ENCODE measurements at regions of chr1 and their contacts with region 1.

Region 1: GRCh38 chr1:19643602-19644394 is at the start of gene NBL1:
- DNase-seq: peak; percentile 87
- H3K4me3 ChIP-seq: peak within 1 kb of the TSS; percentile 96
- H3K27ac ChIP-seq: peak within 1 kb of the TSS; percentile 79
- H3K4me1 ChIP-seq: peaks cover 18% of the 10 kb centered on the region
- H3K27me3 ChIP-seq: no peaks in the 10 kb centered on the region
- total RNA-seq, gene NBL1: 201 and 290 TPM in 2 replicates

Region 2: DNA sequence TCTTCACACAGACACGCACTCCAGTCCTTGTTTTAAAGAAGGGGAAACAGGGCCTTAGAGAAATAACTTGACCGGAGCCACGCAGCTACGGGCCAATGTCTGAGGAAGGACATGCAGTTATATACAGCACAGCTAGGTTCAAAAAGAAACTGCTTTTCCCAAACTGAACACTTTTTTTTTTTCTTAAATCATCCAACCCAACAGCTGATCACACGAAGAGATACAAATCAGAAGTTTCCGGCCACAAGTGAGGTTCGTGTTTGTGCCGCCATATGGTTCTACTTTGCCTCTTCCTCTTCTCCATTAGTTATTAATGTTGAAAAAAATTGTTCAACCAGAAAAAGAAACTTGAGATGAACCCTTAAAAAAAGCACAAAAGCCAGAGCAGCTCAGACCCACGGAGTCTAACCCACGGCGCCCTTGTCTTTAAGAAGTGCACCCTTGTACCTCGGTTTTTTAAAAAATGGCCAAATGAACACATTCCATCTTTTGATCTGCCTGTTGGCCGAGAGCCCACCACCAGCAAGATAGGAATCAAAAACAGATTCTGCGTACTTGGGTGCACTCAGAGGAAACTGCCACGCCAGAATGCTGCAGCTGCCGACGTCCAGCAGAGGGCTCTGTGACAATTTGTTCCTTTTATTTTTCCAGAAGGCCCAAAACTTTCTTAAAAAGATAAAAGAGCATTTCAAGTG is 252.8 kb before region 1 on chr1:
- in situ Hi-C with region 1: loop called (anchors 10 kb)
- DNase-seq: peak; percentile 91
- H3K4me3 ChIP-seq: peak overlapping the region; percentile 52
- H3K27ac ChIP-seq: peak overlapping the region; percentile 97
- H3K4me1 ChIP-seq: peaks cover 40% of the 10 kb centered on the region
- H3K27me3 ChIP-seq: no peaks in the 10 kb centered on the region

Region 3: GRCh38 chr1:19485362-19486187 is 158.2 kb before region 1 on chr1 and contains the start of gene CAPZB:
- in situ Hi-C with region 1: loop called (anchors 5 kb)
- DNase-seq: peak; percentile 97
- H3K4me3 ChIP-seq: peak within 1 kb of the TSS; percentile 91
- H3K27ac ChIP-seq: peak within 1 kb of the TSS; percentile 82
- H3K4me1 ChIP-seq: peaks cover 51% of the 10 kb centered on the region
- H3K27me3 ChIP-seq: no peaks in the 10 kb centered on the region
- total RNA-seq, gene CAPZB: 188 and 229 TPM in 2 replicates